Left cardiac atrium (tissue), 4 donors: ENCODE measurements at regions of chr16 and their contacts with region 1.

Region 1: GRCh38 chr16:77789085-77790008 is 983 bp downstream of the VAT1L start:
- DNase-seq: no peak
- ATAC-seq: peak; percentile 29 to 32

Region 2: DNA sequence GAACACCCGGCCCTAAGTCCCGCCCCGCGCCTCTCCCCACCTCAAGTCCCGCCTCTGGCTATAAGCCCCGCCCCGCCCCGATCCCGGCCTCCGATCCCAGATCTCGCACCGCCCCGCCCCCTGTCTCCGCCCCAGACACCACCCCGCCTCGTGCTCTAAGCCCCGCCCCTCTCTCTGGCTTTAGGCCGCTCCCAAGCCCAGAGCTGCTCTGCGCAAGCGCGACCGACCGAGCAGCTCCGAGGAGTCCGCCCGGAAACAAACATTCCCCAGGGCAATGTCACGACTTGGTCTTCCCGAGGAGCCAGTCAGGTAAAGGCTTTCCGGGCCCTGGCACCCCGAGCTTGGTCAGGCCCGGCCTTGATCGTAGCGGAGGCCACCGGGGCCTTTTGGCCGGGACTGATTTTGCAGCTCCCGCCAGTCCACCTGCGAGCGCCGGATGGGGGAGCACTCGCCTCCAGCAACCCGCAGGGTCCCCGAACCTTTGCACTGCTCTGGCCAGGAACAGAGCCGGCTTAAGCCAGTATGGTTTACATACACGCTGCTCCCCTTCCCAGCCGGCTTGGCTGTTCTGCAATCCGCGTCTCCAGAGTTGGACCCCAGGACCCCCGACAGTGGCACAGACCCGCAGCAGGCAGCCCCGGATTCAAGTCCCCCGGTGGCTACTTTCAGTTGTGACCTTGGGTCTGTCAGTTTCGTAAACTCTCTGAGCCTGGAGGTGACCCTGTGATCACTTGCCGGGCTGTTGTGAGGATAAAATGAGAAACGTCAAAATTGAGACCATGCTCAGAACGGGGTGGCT is 66.8 kb before region 1 on chr16 and contains the start of gene NUDT7:
- intact Hi-C with region 1: no loop called
- DNase-seq: peak; percentile 100
- ATAC-seq: peak; percentile 99
- total RNA-seq, gene NUDT7: 19.3 to 25.8 TPM

Region 3: GRCh38 chr16:77971306-77972271 is 182.2 kb after region 1 on chr16:
- intact Hi-C with region 1: loop called in 1 of 2 experiments (anchors 5 kb)
- DNase-seq: peak; percentile 86
- ATAC-seq: peak; percentile 84 to 91